ENCODE measurements at regions of chr4 and their contacts with region 1.

Region 1: GRCh38 chr4:139030614-139031235 is 15.1 kb downstream of the NOCT start:
- DNase-seq: peak; percentile 43 to 87 (median 68)
- H3K4me3 ChIP-seq: peak overlapping the region in 9 of 59 donors; percentile 8 to 31 (median 19)
- H3K27ac ChIP-seq: peak overlapping the region in 11 of 59 donors; percentile 16 to 94 (median 79)
- H3K27me3 ChIP-seq: no peaks in the 10 kb centered on the region
- CTCF ChIP-seq: peak; percentile 75 to 96 (median 85)

Region 2: GRCh38 chr4:138716559-138717335 is 314.0 kb before region 1 on chr4:
- intact Hi-C with region 1: no loop called
- DNase-seq: no peak
- H3K4me3 ChIP-seq: no peak overlapping the region
- H3K27ac ChIP-seq: no peak overlapping the region
- H3K27me3 ChIP-seq: peaks cover 0 to 7% (median 0%) of the 10 kb centered on the region in 45 donors
- CTCF ChIP-seq: no peak

Region 3: GRCh38 chr4:139115226-139115625 is 84.5 kb after region 1 on chr4:
- intact Hi-C with region 1: no loop called
- DNase-seq: no peak
- H3K4me3 ChIP-seq: no peak overlapping the region
- H3K27ac ChIP-seq: no peak overlapping the region
- H3K27me3 ChIP-seq: no peaks in the 10 kb centered on the region
- CTCF ChIP-seq: no peak

Region 4: DNA sequence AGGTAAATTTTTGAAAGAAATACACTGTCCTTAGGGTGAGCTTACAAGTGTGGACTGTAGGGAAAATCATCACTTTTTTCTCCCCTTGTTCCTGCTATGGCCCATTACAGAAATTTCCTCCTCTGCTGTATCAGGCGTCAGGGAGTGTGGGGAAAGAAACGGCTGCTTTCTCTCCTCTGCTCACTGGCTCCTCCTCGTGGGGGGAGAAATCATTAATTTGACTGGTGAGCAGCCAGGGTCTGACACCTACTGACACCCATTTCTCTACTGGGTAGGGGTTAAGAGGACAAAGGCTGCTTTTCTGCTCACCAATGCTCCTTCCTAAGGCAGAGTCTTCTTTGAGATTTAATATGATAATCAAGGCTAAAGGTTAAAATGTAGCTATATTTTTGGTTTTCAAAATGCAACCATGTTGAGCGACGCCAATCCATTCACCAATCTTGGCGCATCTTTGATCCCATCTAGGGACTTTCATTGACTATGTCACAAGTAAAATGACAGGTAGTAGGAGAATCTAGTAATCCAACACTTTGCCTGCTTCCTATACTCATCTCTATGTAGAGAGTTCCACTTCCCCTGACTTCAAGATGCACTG is 500.2 kb after region 1 on chr4:
- intact Hi-C with region 1: loop called in 1 of 2 experiments (anchors 10 kb)
- DNase-seq: peak in 3 of 10 donors; percentile 43 to 49 (median 47)
- H3K4me3 ChIP-seq: no peak overlapping the region
- H3K27ac ChIP-seq: peak overlapping the region in 3 of 59 donors; percentile 3 to 13 (median 6)
- H3K27me3 ChIP-seq: no peaks in the 10 kb centered on the region
- CTCF ChIP-seq: peak in 55 of 56 donors; percentile 29 to 76 (median 64)